ENCODE measurements at regions of chr6 and their contacts with region 1.

Region 1: DNA sequence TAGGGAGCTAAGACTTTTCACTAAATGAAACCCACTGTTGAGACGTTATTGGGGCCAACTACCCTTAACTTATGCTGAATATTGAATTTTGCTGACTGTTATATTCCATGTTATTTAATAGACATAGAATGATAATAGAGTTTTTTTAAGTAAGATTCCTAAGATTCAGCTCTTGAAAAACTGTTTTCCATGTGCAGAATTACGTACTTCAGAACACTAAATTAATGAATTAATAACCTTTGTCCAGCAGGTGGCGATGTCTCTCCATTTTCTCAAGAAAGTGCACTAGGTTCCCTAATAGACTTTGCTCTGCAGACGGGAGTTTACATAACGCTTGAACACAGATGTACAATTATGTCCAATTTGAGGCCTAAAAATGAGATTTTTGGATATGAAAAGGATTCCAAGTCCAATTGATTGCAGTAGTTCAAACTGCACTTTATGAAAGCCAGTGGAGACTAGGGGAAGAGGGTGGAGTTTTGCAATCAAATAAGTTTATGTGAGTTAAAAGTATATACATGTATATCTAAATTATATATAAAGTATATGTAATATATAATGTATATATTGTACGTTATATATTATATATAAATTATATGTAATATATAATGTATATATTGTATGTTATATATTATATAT is 282.1 kb downstream of the UST start:
- DNase-seq: peak; percentile 23 to 91 (median 58)
- ATAC-seq: peak; percentile 73
- H3K4me3 ChIP-seq: no peak overlapping the region
- H3K4me3 Mint-ChIP-seq: no peak overlapping the region
- H3K27ac ChIP-seq: no peak overlapping the region
- H3K27ac Mint-ChIP-seq: peak overlapping the region; percentile 1
- H3K4me1 ChIP-seq: peaks cover 21% of the 10 kb centered on the region
- H3K4me1 Mint-ChIP-seq: peaks cover 45% of the 10 kb centered on the region
- H3K27me3 ChIP-seq: no peaks in the 10 kb centered on the region
- H3K27me3 Mint-ChIP-seq: no peaks in the 10 kb centered on the region
- CTCF ChIP-seq: peak; percentile 86

Region 2: DNA sequence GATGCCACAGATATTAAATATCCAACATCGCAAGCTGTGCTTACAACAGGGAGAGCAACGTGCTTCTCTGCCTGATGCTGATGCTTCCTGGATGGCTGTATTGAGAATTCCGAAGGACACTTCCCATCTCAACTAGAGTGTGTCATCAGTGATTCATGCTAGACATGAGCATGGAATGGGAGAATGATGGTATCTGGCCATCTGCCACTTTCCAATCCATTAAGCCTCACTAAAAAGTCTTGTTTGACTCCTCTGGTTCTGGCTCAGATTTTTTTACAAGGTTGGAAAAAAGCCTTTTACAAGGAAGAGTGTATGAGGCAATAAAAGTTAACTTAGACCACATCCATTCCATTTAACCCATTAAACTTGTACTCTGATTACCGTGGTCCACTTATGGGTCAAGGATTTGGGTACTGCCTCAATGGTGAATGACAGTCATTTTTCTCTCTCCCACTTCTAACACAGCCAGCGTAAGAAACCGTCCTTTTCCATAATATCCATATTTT is 16.8 kb before region 1 on chr6:
- CTCF ChIA-PET with region 1: no interaction called
- POLR2A ChIA-PET with region 1: no interaction called
- intact Hi-C with region 1: no loop called
- DNase-seq: no peak
- ATAC-seq: no peak
- H3K4me3 ChIP-seq: no peak overlapping the region
- H3K4me3 Mint-ChIP-seq: no peak overlapping the region
- H3K27ac ChIP-seq: no peak overlapping the region
- H3K27ac Mint-ChIP-seq: no peak overlapping the region
- H3K4me1 ChIP-seq: no peaks in the 10 kb centered on the region
- H3K4me1 Mint-ChIP-seq: no peaks in the 10 kb centered on the region
- H3K27me3 ChIP-seq: no peaks in the 10 kb centered on the region
- H3K27me3 Mint-ChIP-seq: no peaks in the 10 kb centered on the region
- CTCF ChIP-seq: no peak

Region 3: DNA sequence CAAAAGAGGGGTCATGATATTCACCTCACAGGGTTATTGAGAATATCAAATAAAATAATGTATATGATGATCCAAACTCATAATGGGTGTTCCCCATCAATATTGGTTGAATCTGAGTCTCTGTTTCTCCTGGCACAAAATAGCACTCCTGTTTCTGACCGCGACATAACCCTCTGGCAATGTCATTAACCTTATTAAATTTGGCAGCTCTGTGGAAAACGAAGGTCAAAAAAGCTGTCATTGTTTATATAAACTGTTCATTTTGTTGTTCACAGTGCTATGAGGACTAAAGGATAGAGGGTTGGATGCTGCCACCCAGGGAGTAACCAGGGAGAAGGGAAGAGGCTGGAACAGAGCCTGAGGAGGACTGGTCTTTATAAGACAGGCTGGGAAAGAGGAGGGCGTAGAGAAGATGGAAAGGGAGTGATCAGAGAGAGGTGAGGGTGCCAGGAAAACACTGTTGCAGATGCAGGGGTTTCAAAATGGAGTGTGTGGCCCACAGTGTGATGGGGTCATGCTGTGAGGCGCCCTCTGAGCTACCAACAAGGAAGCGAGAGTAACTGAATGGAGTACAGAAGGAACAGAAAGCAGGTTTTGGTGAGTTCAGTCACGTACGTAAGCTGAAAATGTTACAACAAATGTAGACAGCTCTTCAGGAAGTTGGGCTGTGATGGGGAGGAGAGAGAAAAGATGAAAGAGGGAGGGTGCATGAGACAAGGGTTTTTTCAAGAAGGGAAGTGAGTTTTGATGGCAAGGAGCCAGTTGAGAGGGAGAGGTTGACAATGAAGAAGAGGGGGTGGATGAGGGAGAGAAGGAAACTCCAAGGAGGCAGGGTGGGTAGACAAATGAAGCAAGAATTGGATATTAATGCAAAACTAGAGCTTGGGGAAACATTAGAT is 37.0 kb after region 1 on chr6:
- CTCF ChIA-PET with region 1: interaction called, 3 read pairs
- POLR2A ChIA-PET with region 1: interaction called, 4 read pairs
- intact Hi-C with region 1: loop called in 1 of 2 experiments (anchors 5 kb)
- DNase-seq: peak in 13 of 14 experiments; percentile 11 to 91 (median 36)
- ATAC-seq: peak; percentile 96
- H3K4me3 ChIP-seq: peak overlapping the region; percentile 25
- H3K4me3 Mint-ChIP-seq: peak overlapping the region; percentile 16
- H3K27ac ChIP-seq: peak overlapping the region; percentile 75 to 83
- H3K27ac Mint-ChIP-seq: peak overlapping the region; percentile 86
- H3K4me1 ChIP-seq: peaks cover 28% of the 10 kb centered on the region
- H3K4me1 Mint-ChIP-seq: peaks cover 37% of the 10 kb centered on the region
- H3K27me3 ChIP-seq: no peaks in the 10 kb centered on the region
- H3K27me3 Mint-ChIP-seq: no peaks in the 10 kb centered on the region
- CTCF ChIP-seq: no peak

Region 4: DNA sequence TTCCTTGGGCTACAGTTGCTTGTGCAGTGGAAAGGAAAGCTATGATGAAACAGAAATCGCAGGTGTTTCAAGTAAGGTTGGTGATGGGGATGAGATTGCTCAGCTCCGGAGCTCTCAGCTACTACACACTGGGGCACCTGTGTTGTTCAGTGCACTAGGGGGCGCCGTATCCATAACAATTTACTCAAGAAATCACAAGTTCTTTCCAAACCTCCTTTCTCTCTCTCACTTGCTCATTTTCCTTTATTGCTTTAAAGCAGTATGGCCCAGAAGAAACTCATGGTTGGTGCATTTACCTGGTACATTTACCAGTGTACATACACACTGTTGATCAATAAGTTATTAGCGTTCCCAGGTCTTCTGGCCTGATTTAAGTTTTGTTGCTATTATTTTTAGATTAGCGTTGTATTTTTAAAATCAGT is 53.4 kb after region 1 on chr6:
- CTCF ChIA-PET with region 1: interaction called, 6 read pairs
- POLR2A ChIA-PET with region 1: no interaction called
- intact Hi-C with region 1: loop called (anchors 1 kb)
- DNase-seq: peak; percentile 76 to 95 (median 86)
- ATAC-seq: peak; percentile 92
- H3K4me3 ChIP-seq: no peak overlapping the region
- H3K4me3 Mint-ChIP-seq: no peak overlapping the region
- H3K27ac ChIP-seq: no peak overlapping the region
- H3K27ac Mint-ChIP-seq: no peak overlapping the region
- H3K4me1 ChIP-seq: peaks cover 15% of the 10 kb centered on the region
- H3K4me1 Mint-ChIP-seq: peaks cover 39% of the 10 kb centered on the region
- H3K27me3 ChIP-seq: no peaks in the 10 kb centered on the region
- H3K27me3 Mint-ChIP-seq: no peaks in the 10 kb centered on the region
- CTCF ChIP-seq: peak; percentile 90

Region 5: DNA sequence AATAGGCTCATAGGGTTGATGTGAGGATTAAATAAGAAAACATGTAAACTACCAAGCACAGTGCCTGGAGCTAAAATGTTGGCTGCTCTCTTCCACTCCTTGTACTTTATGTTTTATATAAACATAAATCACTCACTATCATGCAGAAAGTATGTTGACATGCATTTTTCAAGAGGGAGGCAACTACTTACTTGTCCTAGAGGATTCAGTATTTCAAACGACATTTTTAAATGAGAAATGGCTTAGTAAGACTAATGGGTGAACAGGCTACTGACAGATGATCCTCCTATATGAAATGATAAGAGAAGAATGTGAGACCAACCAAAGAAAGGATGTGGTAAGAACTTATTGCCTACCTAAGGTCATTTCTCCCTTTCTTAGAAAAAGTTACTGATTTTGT is 668.0 kb after region 1 on chr6:
- CTCF ChIA-PET with region 1: no interaction called
- POLR2A ChIA-PET with region 1: no interaction called
- intact Hi-C with region 1: loop called in 1 of 2 experiments (anchors 10 kb)
- DNase-seq: no peak
- ATAC-seq: no peak
- H3K4me3 ChIP-seq: no peak overlapping the region
- H3K4me3 Mint-ChIP-seq: no peak overlapping the region
- H3K27ac ChIP-seq: peak overlapping the region in 1 of 2 donors; percentile 27
- H3K27ac Mint-ChIP-seq: peak overlapping the region; percentile 28
- H3K4me1 ChIP-seq: peaks cover 2% of the 10 kb centered on the region
- H3K4me1 Mint-ChIP-seq: peaks cover 34% of the 10 kb centered on the region
- H3K27me3 ChIP-seq: no peaks in the 10 kb centered on the region
- H3K27me3 Mint-ChIP-seq: no peaks in the 10 kb centered on the region
- CTCF ChIP-seq: no peak